Panc1 (cell line): ENCODE measurements at regions of chr11 and their contacts with region 1.

Region 1: DNA sequence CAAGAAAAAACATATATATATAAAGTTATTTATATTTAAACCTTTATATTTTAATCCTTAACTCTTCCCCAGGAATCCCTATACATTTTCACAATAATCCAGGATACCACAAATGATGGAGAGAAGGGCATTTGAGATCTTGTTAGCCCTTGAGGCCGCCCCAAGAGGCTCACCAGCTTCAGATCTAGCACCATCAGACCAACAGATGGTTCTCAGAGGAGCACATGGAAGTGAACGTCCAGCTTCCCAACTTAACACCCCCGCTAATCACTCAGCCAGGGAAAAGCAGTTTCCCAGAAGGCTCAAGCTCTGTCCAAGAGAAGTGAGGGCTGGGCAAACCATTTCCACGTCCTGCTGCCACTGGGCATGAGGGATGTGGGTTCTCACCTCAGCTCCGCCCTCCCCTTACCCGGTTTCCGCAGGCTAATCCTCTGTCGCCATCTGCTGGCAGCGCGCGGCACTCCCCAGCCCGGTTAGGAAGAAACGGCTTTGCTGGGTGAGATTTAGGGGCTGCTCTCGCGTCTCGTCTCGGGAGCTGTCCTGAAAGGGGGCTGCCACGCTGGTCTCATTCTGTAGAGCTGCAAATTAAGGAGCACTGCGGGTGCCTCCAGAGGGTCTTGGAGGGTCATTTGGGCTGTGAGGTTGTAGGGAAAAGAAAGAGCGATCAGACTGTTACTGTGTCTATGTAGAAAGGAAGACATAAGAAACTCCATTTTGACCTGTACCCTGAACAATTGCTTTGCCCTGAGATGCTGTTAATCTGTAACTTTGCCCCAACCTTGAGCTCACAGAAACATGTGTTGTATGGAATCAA is 6.8 kb upstream of the FAM111A start:
- DNase-seq: no peak
- ATAC-seq: peak; percentile 100
- H3K4me3 ChIP-seq: peak overlapping the region; percentile 12 to 26; a peak in 3 of 4 replicates
- H3K27ac ChIP-seq: no peak overlapping the region; the same call in 1 of the 2 replicates
- H3K4me1 ChIP-seq: no peaks in the 10 kb centered on the region
- H3K27me3 ChIP-seq: no peaks in the 10 kb centered on the region
- CTCF ChIP-seq: peak; percentile 99

Region 2: GRCh38 chr11:59053387-59053786 is 82.5 kb before region 1 on chr11:
- CTCF ChIA-PET with region 1: no interaction called
- POLR2A ChIA-PET with region 1: no interaction called
- in situ Hi-C with region 1: no loop called
- intact Hi-C with region 1: loop called (anchors 5 kb)
- DNase-seq: peak; percentile 10
- ATAC-seq: peak; percentile 75; the same call in 1 of the 2 replicates
- H3K4me3 ChIP-seq: no peak overlapping the region
- H3K27ac ChIP-seq: no peak overlapping the region
- H3K4me1 ChIP-seq: no peaks in the 10 kb centered on the region
- H3K27me3 ChIP-seq: no peaks in the 10 kb centered on the region; the same call in 1 of the 2 replicates
- CTCF ChIP-seq: peak; percentile 84

Region 3: GRCh38 chr11:59097113-59097708 is 38.6 kb before region 1 on chr11:
- CTCF ChIA-PET with region 1: no interaction called
- POLR2A ChIA-PET with region 1: no interaction called
- in situ Hi-C with region 1: no loop called
- intact Hi-C with region 1: loop called (anchors 2 kb)
- DNase-seq: no peak
- ATAC-seq: no peak
- H3K4me3 ChIP-seq: no peak overlapping the region
- H3K27ac ChIP-seq: no peak overlapping the region
- H3K4me1 ChIP-seq: no peaks in the 10 kb centered on the region
- H3K27me3 ChIP-seq: peaks cover 9% of the 10 kb centered on the region; the same call in 1 of the 2 replicates
- CTCF ChIP-seq: peak; percentile 78